ENCODE measurements at regions of chr3 and their contacts with region 1.

Region 1: GRCh38 chr3:184017672-184018423 is at the start of gene ABCC5:
- DNase-seq: peak; percentile 87 to 94
- H3K4me3 ChIP-seq: peak within 1 kb of the TSS; percentile 99
- H3K27ac ChIP-seq: peak within 1 kb of the TSS; percentile 58
- H3K4me1 ChIP-seq: peaks cover 34% of the 10 kb centered on the region
- H3K27me3 ChIP-seq: no peaks in the 10 kb centered on the region
- CTCF ChIP-seq: peak; percentile 83
- total RNA-seq, gene ABCC5: 133 and 151 TPM in 2 replicates

Region 2: GRCh38 chr3:183904833-183905780 is 112.7 kb before region 1 on chr3:
- CTCF ChIA-PET with region 1: no interaction called
- POLR2A ChIA-PET with region 1: no interaction called
- intact Hi-C with region 1: loop called (anchors 2 kb)
- DNase-seq: no peak
- H3K4me3 ChIP-seq: no peak overlapping the region
- H3K27ac ChIP-seq: no peak overlapping the region
- H3K4me1 ChIP-seq: no peaks in the 10 kb centered on the region
- H3K27me3 ChIP-seq: no peaks in the 10 kb centered on the region
- CTCF ChIP-seq: no peak

Region 3: DNA sequence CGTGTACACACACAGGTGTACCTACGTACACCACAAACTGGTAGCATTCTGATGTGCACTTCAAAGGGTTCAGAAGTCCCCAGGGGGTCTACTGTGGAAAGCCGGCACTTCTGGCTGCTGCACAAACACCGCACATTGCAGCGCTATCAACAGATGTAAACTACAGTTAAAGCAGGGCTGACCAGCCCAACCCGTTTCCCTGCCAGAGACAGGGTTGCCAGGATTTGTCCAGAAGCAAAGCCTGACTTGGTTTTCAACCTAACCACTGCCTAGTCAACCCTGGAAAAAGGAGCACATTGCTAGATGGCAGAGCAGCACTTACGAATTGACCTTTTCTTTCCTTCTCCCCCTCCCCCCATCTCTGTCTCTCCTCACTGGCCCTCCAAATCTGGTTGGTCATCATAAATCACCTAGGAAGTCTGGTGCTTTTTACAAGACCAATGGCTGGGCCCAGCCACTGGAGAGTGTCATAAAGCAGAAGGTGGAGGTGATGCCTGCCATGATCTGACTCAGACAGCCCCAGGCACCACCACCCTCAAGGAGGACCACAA is 51.5 kb before region 1 on chr3:
- CTCF ChIA-PET with region 1: no interaction called
- POLR2A ChIA-PET with region 1: interaction called, 5 read pairs
- intact Hi-C with region 1: loop called (anchors 1 kb)
- DNase-seq: peak; percentile 83 to 98
- H3K4me3 ChIP-seq: peak overlapping the region; percentile 27
- H3K27ac ChIP-seq: peak overlapping the region; percentile 99
- H3K4me1 ChIP-seq: peaks cover 72% of the 10 kb centered on the region
- H3K27me3 ChIP-seq: no peaks in the 10 kb centered on the region
- CTCF ChIP-seq: no peak

Region 4: GRCh38 chr3:184052767-184053166 is 34.9 kb after region 1 on chr3 and contains the start of gene HTR3C:
- CTCF ChIA-PET with region 1: no interaction called
- POLR2A ChIA-PET with region 1: no interaction called
- intact Hi-C with region 1: no loop called
- DNase-seq: no peak
- H3K4me3 ChIP-seq: no peak within 1 kb of the TSS
- H3K27ac ChIP-seq: no peak within 1 kb of the TSS
- H3K4me1 ChIP-seq: no peaks in the 10 kb centered on the region
- H3K27me3 ChIP-seq: no peaks in the 10 kb centered on the region; the same call in 1 of the 2 replicates
- CTCF ChIP-seq: no peak
- total RNA-seq, gene HTR3C: not detected in 2 replicates

Region 5: DNA sequence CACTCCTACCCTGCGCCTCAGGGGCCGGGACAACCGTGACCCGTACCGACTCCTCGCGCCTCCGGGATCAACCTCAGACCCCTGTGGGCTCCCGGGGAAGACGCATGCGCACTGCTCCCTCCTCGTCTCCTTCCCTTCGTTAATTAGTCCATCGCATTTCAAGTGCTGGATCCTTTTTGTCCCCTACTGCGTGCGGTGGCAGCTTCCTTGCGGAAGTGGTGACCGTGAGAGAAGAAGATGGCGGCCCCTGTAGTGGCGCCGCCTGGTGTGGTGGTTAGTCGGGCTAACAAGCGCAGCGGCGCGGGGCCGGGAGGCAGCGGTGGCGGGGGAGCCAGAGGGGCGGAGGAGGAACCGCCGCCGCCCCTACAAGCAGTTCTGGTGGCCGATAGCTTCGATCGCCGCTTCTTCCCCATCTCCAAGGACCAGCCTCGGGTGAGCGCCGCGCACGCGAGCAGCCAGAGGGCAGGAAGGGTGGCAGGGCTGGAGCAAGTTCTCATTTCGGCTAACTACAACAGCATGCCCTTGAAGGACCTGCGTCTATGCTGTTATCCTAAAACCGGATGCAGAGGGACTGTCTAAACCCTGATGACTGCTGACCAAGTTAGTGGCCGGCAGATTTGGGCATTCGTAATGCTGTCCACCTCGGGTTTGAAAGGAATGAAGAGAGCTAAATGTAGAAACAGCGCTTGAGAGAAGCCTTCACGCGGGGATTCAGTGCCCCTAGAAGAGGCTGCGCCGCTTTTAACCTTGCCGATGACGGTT is 117.5 kb after region 1 on chr3 and contains the start of gene EIF2B5:
- CTCF ChIA-PET with region 1: interaction called, 4 read pairs
- POLR2A ChIA-PET with region 1: interaction called, 7 read pairs
- intact Hi-C with region 1: loop called (anchors 1 kb)
- DNase-seq: peak; percentile 87 to 88
- H3K4me3 ChIP-seq: peak within 1 kb of the TSS; percentile 80
- H3K27ac ChIP-seq: peak within 1 kb of the TSS; percentile 79
- H3K4me1 ChIP-seq: peaks cover 25% of the 10 kb centered on the region
- H3K27me3 ChIP-seq: no peaks in the 10 kb centered on the region
- CTCF ChIP-seq: peak; percentile 48
- total RNA-seq, gene EIF2B5: 45.7 and 54.1 TPM in 2 replicates

Region 6: GRCh38 chr3:184241447-184242296 is 223.8 kb after region 1 on chr3:
- CTCF ChIA-PET with region 1: interaction called, 3 read pairs
- POLR2A ChIA-PET with region 1: no interaction called
- intact Hi-C with region 1: loop called (anchors 5 kb)
- DNase-seq: peak; percentile 72 to 94
- H3K4me3 ChIP-seq: no peak overlapping the region; the same call in 1 of the 2 replicates
- H3K27ac ChIP-seq: no peak overlapping the region
- H3K4me1 ChIP-seq: 0 out of 2 replicates have a peak, but pooled peaks cover 7% of the 10 kb centered on the region
- H3K27me3 ChIP-seq: no peaks in the 10 kb centered on the region
- CTCF ChIP-seq: peak; percentile 70

Region 7: DNA sequence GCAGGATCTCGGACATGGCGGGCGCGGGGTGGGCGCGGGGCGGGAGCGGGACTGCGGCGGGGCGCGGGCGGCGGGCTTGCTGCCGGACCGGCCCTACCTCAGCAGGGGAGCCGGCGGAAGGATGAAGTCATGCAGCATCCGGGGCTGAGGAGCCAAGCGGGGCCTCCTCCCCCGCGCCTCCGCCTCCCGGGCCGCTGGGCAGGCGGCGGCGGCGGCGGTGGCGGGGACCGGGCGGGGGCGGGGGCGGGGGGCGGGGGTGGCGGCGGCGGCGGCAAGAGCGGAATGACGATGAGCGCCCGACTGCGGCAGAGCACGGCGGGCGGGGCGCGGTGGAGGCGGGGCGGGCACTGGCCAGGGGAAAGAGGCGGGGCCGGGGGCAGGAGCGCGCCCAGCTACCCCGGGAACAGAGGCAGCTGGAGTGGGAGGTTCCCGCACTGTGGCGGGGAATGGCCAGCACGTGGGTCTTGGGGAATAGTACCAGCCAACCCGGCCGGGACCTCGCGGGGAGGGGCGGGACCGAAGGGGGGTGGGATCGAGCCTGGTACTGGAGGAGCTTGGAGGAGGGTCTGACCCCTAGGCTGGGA is 243.5 kb after region 1 on chr3 and contains the start of gene CAMK2N2:
- CTCF ChIA-PET with region 1: no interaction called
- POLR2A ChIA-PET with region 1: interaction called, 10 read pairs
- intact Hi-C with region 1: no loop called
- DNase-seq: peak; percentile 78 to 82
- H3K4me3 ChIP-seq: peak within 1 kb of the TSS; percentile 93
- H3K27ac ChIP-seq: no peak within 1 kb of the TSS
- H3K4me1 ChIP-seq: peaks cover 15% of the 10 kb centered on the region; the same call in 1 of the 2 replicates
- H3K27me3 ChIP-seq: no peaks in the 10 kb centered on the region
- CTCF ChIP-seq: no peak
- total RNA-seq, gene CAMK2N2: 2.2 and 2.6 TPM in 2 replicates

Measured in PC-9 (cell line).